ENCODE measurements at regions of chr20 and their contacts with region 1.

Region 1: DNA sequence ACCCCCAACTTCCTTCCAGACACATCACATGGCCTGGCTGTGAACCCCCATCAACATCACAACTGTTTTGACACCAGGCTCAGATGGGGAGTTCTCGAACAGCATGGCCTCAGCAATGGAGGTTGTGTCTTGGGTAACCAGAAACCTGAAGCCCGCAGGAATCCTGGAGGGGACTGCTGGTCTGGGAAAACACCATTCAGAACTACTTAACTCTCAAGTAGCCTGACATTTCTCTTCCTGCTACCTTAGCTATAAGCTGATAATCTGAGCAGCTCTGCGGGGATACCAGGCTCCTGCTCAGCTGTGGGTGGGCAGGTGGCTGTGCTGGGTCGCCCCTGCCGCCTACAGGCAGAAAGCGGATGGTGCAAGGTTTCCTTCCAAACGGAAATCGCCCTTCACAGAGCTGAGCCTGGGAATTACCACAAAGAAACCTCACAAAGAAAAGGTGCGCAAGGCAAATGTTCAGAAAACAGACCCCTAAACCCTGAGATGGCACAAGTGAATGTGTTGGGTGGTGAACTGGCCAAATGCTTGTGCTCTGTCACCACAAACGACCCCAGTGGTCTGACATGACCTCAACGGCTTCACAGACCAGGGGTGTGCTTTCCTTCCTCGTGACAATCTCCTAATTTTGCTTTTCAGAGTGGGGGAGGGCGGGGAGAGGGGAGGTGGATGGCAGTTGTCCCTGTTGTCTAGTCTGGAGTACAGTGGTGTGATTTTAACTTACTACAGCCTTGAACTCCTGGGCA is 29.5 kb downstream of the SNX5 start:
- DNase-seq: no peak
- ATAC-seq: peak; percentile 92
- H3K4me3 ChIP-seq: no peak overlapping the region
- H3K27ac ChIP-seq: peak overlapping the region; percentile 38; the same call in 1 of the 2 replicates
- H3K4me1 ChIP-seq: peaks cover 23% of the 10 kb centered on the region
- H3K27me3 ChIP-seq: no peaks in the 10 kb centered on the region
- CTCF ChIP-seq: peak; percentile 97 to 99 (median 97)
- EP300 ChIP-seq: no peak
- POLR2A ChIP-seq: no peak
- RAD21 ChIP-seq: peak; percentile 94

Region 2: DNA sequence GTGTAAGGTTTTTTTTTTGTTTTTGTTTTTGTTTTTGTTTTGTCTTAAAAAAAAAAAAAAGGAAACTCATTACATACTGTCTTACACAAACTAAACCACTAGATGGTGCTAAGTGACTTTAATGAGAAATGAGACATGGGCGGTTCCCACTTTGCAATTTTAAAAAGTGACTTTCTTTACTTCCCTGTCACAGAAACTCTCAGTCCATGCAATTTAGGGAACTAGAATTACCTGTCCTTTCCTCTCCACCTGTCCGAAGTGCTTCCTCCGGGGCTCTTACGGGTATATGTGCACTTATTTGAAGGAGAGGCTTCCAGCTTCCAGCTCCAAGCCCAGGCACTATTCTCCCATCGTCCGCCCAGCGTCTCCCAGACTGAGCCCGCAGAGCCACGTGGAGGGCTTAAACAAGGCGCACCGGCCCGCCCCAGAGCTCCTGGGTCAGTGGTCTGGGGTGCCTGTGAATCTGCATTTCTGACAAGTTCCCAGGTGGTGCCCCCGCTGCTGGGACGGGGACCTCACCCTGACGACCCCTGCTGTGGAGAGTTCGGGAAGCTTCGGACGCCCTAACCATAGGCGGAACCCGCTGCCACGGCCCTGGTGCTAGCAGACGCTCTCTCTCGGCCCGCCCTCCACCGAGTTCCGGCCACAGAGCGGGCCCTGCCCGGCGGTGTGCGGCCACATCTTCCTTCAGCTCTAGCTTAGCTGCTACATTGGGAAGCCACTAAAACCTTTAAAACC is 434.0 kb before region 1 on chr20:
- CTCF ChIA-PET with region 1: interaction called, 24 read pairs
- POLR2A ChIA-PET with region 1: interaction called, 3 read pairs
- RAD21 ChIA-PET with region 1: interaction called, 20 read pairs
- SMC1A ChIA-PET with region 1: interaction called, 10 read pairs
- in situ Hi-C with region 1: no loop called
- intact Hi-C with region 1: no loop called
- DNase-seq: peak; percentile 25
- ATAC-seq: peak; percentile 92
- H3K4me3 ChIP-seq: peak overlapping the region; percentile 56; the same call in 1 of the 2 replicates
- H3K27ac ChIP-seq: no peak overlapping the region
- H3K4me1 ChIP-seq: peaks cover 3% of the 10 kb centered on the region
- H3K27me3 ChIP-seq: no peaks in the 10 kb centered on the region
- CTCF ChIP-seq: peak; percentile 59 to 71 (median 61)
- EP300 ChIP-seq: no peak
- POLR2A ChIP-seq: no peak
- RAD21 ChIP-seq: peak; percentile 75

Region 3: DNA sequence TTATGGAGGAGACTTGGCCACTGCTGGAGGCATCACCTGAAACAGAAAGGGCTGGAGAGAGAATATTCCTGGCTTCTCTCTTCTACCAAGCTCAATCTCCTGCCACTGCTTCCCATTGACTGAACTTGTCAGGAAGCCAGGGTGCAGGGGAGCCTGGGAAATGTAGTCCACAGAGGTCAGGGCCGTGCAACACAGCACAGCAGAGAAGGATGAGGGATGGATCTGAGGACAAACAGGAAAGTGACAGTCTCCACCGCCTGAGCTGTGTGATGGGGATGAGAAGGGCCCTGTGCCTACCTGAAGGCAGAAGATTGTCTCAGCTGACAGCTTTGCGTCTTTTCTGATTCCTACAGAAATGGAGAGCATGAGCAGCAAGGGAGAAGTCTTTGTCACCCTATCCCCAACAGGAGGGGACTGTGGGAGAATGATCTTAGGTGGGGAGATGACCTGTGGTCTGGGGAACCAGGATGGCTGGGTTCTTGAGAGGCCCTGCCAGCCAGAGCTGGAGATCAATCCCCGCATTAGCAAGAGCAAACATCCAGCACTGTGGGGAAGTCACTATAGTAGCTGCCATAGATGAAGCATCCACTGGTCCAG is 84.6 kb before region 1 on chr20:
- CTCF ChIA-PET with region 1: no interaction called
- POLR2A ChIA-PET with region 1: no interaction called
- RAD21 ChIA-PET with region 1: interaction called, 10 read pairs
- SMC1A ChIA-PET with region 1: interaction called, 3 read pairs
- in situ Hi-C with region 1: no loop called
- intact Hi-C with region 1: no loop called
- DNase-seq: no peak
- ATAC-seq: peak; percentile 36
- H3K4me3 ChIP-seq: no peak overlapping the region
- H3K27ac ChIP-seq: peak overlapping the region; percentile 17; the same call in 1 of the 2 replicates
- H3K4me1 ChIP-seq: peaks cover 48% of the 10 kb centered on the region
- H3K27me3 ChIP-seq: no peaks in the 10 kb centered on the region
- CTCF ChIP-seq: no peak
- EP300 ChIP-seq: no peak
- POLR2A ChIP-seq: no peak
- RAD21 ChIP-seq: no peak

Region 4: DNA sequence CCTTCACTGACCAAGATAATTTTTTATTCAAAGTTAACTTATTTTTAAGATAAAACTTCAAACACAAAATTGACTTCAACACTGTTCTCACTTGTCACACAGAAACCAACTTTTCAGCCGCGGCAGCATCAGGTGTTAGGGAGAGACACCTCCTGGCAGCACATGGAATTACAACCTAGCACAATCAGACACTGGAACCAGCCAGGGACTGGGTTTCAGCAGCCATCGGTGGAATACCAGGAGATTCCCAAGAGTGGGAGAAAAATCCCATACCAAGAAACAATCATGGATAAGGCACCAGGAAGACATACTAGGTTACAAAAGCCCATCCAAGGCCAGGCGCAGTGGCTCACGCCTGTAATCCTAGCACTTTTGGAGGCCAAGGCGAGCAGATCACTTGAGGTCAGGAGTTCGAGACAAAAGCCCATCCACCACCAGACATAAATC is 40.5 kb before region 1 on chr20:
- CTCF ChIA-PET with region 1: interaction called, 31 read pairs
- POLR2A ChIA-PET with region 1: interaction called, 4 read pairs
- RAD21 ChIA-PET with region 1: interaction called, 10 read pairs
- SMC1A ChIA-PET with region 1: interaction called, 14 read pairs
- in situ Hi-C with region 1: loop called (anchors 5 kb)
- intact Hi-C with region 1: loop called (anchors 5 kb)
- DNase-seq: no peak
- ATAC-seq: peak; percentile 54
- H3K4me3 ChIP-seq: no peak overlapping the region
- H3K27ac ChIP-seq: no peak overlapping the region
- H3K4me1 ChIP-seq: peaks cover 35% of the 10 kb centered on the region
- H3K27me3 ChIP-seq: no peaks in the 10 kb centered on the region
- CTCF ChIP-seq: peak; percentile 89 to 94 (median 91)
- EP300 ChIP-seq: no peak
- POLR2A ChIP-seq: no peak
- RAD21 ChIP-seq: peak; percentile 100

Region 5: DNA sequence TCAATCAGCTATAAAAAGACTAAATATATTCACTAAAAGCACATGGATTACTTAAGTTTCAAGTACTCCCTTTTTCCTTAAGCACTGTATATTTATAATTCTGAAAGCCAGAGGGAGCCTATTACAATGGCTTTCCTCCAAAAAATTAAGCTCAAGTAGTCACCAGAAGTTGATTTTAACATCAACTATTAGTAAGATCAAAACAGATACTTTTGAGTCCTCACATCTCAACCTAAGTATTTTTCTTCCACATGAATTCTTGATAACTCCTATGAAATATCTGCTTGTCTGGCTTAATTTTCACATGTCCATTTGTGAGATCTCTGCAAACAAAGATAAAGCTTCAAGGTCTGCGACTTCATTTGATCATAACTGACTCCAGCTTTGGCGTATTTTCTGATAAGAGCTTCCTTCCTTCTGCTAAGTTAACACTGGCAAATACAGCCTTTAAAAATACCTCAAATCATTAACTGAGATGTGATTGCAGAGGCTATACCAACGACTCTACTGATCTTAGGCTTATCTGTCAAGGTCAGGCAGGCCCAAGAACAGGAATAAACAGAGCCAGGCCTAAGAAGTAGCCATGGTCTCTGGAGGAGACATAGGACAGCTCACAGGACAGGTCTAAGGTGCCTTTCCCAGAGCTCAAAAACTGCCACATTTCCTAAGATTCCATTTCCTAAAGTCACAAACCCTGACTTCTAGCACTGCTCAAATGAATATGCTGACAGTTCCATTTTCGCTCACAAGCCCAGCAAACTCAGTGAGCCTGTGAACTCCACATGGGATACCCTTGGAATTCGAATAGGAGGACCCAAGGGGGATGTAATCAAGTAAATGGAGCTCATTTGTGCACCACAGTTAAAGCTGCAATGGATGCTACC is 19.6 kb after region 1 on chr20:
- CTCF ChIA-PET with region 1: interaction called, 44 read pairs
- POLR2A ChIA-PET with region 1: no interaction called
- RAD21 ChIA-PET with region 1: interaction called, 3 read pairs
- SMC1A ChIA-PET with region 1: interaction called, 32 read pairs
- in situ Hi-C with region 1: no loop called
- intact Hi-C with region 1: no loop called
- DNase-seq: no peak
- ATAC-seq: peak; percentile 2; the same call in 2 of the 3 replicates
- H3K4me3 ChIP-seq: peak overlapping the region; percentile 86; the same call in 1 of the 2 replicates
- H3K27ac ChIP-seq: peak overlapping the region; percentile 54
- H3K4me1 ChIP-seq: peaks cover 48% of the 10 kb centered on the region
- H3K27me3 ChIP-seq: no peaks in the 10 kb centered on the region
- CTCF ChIP-seq: no peak
- EP300 ChIP-seq: no peak
- POLR2A ChIP-seq: no peak
- RAD21 ChIP-seq: no peak

Region 6: GRCh38 chr20:17995967-17996819 is 57.1 kb after region 1 on chr20:
- CTCF ChIA-PET with region 1: interaction called, 34 read pairs
- POLR2A ChIA-PET with region 1: no interaction called
- RAD21 ChIA-PET with region 1: interaction called, 19 read pairs
- SMC1A ChIA-PET with region 1: interaction called, 14 read pairs
- in situ Hi-C with region 1: no loop called
- intact Hi-C with region 1: loop called (anchors 1 kb)
- DNase-seq: no peak
- ATAC-seq: peak; percentile 61
- H3K4me3 ChIP-seq: no peak overlapping the region
- H3K27ac ChIP-seq: no peak overlapping the region
- H3K4me1 ChIP-seq: peaks cover 21% of the 10 kb centered on the region
- H3K27me3 ChIP-seq: no peaks in the 10 kb centered on the region
- CTCF ChIP-seq: peak; percentile 97 to 99 (median 98)
- EP300 ChIP-seq: no peak
- POLR2A ChIP-seq: no peak
- RAD21 ChIP-seq: peak; percentile 99

Region 7: DNA sequence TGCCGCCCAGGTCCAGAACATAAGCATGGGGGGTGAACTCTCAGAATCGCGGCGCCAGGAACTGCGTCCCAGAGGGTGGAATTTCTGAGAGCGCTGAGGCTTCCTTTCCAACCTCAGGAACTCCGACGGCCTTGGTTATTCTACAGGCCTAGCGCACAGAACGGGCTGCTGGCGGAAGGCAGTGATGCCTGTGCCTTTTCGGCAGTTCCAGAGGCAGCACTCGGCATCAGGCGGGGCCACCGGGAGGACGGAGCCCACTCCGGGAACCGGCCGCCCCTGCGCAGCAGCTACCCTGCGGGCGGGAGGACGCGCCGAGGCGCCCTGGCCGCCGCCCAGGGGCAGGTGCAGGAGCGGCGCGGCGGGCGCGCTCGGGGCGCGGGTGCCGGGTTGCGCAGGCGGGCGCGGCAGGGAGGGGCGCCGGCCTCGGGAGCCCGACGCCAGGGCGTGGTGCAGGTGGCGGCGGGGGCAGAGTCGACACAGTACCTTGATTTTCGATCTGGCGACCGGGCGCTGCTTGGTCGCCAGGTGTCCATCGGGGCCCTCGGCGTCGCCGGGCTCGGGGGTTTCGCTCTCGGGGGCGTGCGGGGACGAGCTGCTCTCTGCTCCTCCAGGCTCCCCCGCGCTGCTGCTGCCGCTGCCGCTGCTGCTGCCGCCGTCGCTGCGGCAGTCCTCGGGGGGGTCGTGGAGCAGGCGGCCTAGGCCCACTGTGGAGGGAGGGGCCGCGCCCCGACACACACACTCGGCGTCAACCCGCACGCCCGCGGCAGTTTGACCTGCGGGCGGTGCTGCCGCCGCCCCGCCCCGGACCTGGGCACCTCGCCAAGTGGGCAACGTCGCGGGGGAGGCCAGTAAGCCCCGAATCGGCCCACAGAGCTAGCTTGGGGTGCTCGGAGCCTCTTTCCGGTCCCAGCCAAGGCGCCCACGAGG is 117.4 kb after region 1 on chr20:
- CTCF ChIA-PET with region 1: no interaction called
- POLR2A ChIA-PET with region 1: no interaction called
- RAD21 ChIA-PET with region 1: no interaction called
- SMC1A ChIA-PET with region 1: no interaction called
- in situ Hi-C with region 1: no loop called
- intact Hi-C with region 1: no loop called
- DNase-seq: no peak
- ATAC-seq: peak; percentile 30; the same call in 2 of the 3 replicates
- H3K4me3 ChIP-seq: 0 out of 2 replicates have a peak overlapping the region, but pooled peaks have one; percentile 11
- H3K27ac ChIP-seq: no peak overlapping the region
- H3K4me1 ChIP-seq: no peaks in the 10 kb centered on the region
- H3K27me3 ChIP-seq: peaks cover 16 to 26% of the 10 kb centered on the region in 2 experiments
- CTCF ChIP-seq: no peak
- EP300 ChIP-seq: no peak
- POLR2A ChIP-seq: no peak
- RAD21 ChIP-seq: no peak